ENCODE measurements at regions of chr1 and their contacts with region 1.

Region 1: DNA sequence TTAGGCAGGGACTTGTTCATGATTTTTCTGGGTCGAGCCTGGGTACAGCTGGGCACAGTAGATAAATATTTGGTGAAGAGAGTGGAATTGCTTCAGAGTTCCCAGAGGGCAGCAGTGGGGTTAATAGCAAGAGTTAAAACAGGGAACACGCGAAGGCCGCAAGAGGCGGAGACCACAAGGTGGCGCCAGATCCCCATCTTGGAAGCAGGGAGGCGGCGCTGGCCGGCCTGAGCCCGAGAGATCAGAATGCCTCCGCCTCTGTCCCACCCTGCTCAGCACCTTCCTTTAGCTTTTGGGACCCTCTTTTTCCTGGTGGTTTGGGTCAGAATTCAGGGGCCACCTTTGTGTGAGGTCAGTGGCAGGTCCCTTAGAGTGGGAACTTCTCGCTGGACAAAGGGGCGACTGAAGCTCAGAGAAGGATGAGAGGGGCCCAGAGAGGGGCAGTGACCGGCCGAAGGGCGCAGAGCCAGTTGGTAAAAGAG is 6.5 kb upstream of the PADI2 start:
- DNase-seq: peak; percentile 82 to 83 (median 83)
- H3K4me3 ChIP-seq: no peak overlapping the region
- H3K4me3 Mint-ChIP-seq: no peak overlapping the region
- H3K27ac ChIP-seq: no peak overlapping the region
- H3K27ac Mint-ChIP-seq: peak overlapping the region; percentile 33 to 88 (median 60)
- H3K4me1 ChIP-seq: peaks cover 56 to 57% of the 10 kb centered on the region in 2 donors
- H3K4me1 Mint-ChIP-seq: peaks cover 50% of the 10 kb centered on the region
- H3K27me3 ChIP-seq: no peaks in the 10 kb centered on the region
- H3K27me3 Mint-ChIP-seq: peaks cover 0 to 2% (median 0%) of the 10 kb centered on the region in 3 donors
- CTCF ChIP-seq: peak; percentile 93

Region 2: DNA sequence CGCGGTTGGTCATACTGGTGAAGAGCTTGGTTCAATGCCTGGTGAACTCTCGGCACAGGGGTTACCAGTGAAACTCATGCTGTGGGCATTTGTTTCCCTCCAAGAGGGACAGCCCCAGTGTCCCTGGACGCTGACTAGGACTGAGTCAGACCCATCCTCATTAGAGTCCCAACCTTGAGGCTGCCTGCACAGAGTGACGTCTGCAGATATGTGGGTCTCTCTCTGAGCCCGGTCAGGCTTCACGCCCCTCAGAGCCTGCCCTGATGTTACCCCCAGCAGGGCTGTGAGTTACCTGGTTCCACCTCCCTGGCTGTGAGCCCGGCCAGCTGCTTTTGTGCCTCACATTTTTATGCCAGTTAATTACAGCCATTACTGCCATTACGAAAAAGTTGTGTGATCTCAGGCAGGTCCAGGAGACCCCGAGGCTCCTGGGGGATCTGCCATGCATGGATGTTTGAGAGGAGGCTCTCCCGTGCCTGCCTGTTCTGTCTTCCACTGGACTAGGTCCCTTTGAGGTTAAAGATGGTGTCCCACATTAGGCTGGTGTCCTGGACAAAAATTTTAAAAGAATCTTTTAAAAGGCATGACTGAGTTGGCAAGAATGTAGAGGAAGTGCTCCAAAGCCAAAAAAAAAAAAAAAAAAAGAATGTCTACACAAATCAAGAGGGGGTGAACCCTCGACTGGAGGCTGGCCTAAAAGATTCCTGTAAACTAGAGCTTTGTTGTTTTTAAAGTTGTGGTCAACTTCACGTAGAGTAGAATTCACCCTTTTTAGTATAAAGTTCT is 42.5 kb after region 1 on chr1:
- intact Hi-C with region 1: no loop called
- DNase-seq: no peak
- H3K4me3 ChIP-seq: no peak overlapping the region
- H3K4me3 Mint-ChIP-seq: no peak overlapping the region
- H3K27ac ChIP-seq: no peak overlapping the region
- H3K27ac Mint-ChIP-seq: no peak overlapping the region
- H3K4me1 ChIP-seq: no peaks in the 10 kb centered on the region
- H3K4me1 Mint-ChIP-seq: peaks cover 1% of the 10 kb centered on the region
- H3K27me3 ChIP-seq: no peaks in the 10 kb centered on the region
- H3K27me3 Mint-ChIP-seq: peaks cover 6 to 11% (median 10%) of the 10 kb centered on the region in 3 donors
- CTCF ChIP-seq: no peak

Region 3: GRCh38 chr1:17181781-17182464 is 56.1 kb after region 1 on chr1:
- intact Hi-C with region 1: loop called in 1 of 2 experiments (anchors 5 kb)
- DNase-seq: peak; percentile 26 to 60 (median 47)
- H3K4me3 ChIP-seq: peak overlapping the region in 1 of 3 experiments; percentile 49
- H3K4me3 Mint-ChIP-seq: peak overlapping the region; percentile 16 to 27
- H3K27ac ChIP-seq: peak overlapping the region in 1 of 2 donors; percentile 60
- H3K27ac Mint-ChIP-seq: peak overlapping the region in 5 of 7 donors; percentile 46 to 72 (median 66)
- H3K4me1 ChIP-seq: peaks cover 18 to 29% of the 10 kb centered on the region in 2 donors
- H3K4me1 Mint-ChIP-seq: peaks cover 26% of the 10 kb centered on the region
- H3K27me3 ChIP-seq: no peaks in the 10 kb centered on the region
- H3K27me3 Mint-ChIP-seq: peaks cover 0 to 2% (median 1%) of the 10 kb centered on the region in 3 donors
- CTCF ChIP-seq: no peak

Region 4: DNA sequence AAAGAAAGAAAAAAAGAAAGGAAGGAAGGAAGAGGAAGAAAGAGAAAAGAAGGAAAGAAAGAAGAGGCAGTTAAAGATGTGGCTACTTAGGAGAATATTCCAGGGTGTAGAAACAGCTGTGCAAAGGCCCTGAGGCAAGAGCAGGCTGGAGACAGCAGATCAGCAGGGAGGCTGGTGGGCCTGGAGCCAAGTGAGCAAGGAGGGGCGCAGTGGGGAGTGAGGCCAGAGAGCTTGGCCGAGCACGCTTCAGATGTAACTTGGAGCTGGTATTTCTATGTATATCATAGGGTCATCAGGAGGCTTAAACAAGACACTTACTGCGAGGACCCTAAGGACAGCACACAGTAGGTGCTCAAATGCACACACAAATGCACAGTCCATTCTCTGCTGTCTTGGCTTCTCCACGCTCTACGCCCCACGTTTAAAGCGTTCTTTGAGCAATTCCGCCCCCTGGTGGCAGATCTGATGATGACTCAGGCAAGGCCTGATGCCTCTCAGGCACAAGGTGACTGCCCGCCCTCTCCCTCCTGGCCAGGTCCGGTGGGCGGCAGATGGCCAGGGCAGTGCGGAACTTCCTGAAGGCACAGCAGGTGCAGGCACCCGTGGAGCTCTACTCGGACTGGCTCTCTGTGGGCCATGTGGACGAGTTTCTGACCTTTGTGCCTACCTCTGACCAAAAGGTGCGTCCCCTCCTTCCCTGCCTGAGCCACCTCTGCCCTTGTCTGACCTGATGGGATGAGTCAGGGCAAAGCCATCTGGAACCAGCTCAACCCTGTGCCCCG is 111.2 kb after region 1 on chr1:
- intact Hi-C with region 1: loop called (anchors 1 kb)
- DNase-seq: peak; percentile 81 to 86 (median 85)
- H3K4me3 ChIP-seq: no peak overlapping the region
- H3K4me3 Mint-ChIP-seq: no peak overlapping the region
- H3K27ac ChIP-seq: no peak overlapping the region
- H3K27ac Mint-ChIP-seq: peak overlapping the region in 3 of 7 donors; percentile 41 to 63 (median 55)
- H3K4me1 ChIP-seq: peaks cover 12% of the 10 kb centered on the region in 2 donors
- H3K4me1 Mint-ChIP-seq: peaks cover 22% of the 10 kb centered on the region
- H3K27me3 ChIP-seq: no peaks in the 10 kb centered on the region
- H3K27me3 Mint-ChIP-seq: peaks cover 0 to 5% (median 5%) of the 10 kb centered on the region in 3 donors
- CTCF ChIP-seq: peak; percentile 93

Region 5: GRCh38 chr1:17335821-17336710 is 210.3 kb after region 1 on chr1:
- intact Hi-C with region 1: loop called in 1 of 2 experiments (anchors 10 kb)
- DNase-seq: peak; percentile 47 to 60 (median 58)
- H3K4me3 ChIP-seq: no peak overlapping the region
- H3K4me3 Mint-ChIP-seq: no peak overlapping the region
- H3K27ac ChIP-seq: no peak overlapping the region
- H3K27ac Mint-ChIP-seq: peak overlapping the region in 3 of 7 donors; percentile 26 to 60 (median 56)
- H3K4me1 ChIP-seq: no peaks in the 10 kb centered on the region
- H3K4me1 Mint-ChIP-seq: peaks cover 1% of the 10 kb centered on the region
- H3K27me3 ChIP-seq: no peaks in the 10 kb centered on the region
- H3K27me3 Mint-ChIP-seq: peaks cover 0 to 2% (median 1%) of the 10 kb centered on the region in 3 donors
- CTCF ChIP-seq: peak; percentile 90

Region 6: DNA sequence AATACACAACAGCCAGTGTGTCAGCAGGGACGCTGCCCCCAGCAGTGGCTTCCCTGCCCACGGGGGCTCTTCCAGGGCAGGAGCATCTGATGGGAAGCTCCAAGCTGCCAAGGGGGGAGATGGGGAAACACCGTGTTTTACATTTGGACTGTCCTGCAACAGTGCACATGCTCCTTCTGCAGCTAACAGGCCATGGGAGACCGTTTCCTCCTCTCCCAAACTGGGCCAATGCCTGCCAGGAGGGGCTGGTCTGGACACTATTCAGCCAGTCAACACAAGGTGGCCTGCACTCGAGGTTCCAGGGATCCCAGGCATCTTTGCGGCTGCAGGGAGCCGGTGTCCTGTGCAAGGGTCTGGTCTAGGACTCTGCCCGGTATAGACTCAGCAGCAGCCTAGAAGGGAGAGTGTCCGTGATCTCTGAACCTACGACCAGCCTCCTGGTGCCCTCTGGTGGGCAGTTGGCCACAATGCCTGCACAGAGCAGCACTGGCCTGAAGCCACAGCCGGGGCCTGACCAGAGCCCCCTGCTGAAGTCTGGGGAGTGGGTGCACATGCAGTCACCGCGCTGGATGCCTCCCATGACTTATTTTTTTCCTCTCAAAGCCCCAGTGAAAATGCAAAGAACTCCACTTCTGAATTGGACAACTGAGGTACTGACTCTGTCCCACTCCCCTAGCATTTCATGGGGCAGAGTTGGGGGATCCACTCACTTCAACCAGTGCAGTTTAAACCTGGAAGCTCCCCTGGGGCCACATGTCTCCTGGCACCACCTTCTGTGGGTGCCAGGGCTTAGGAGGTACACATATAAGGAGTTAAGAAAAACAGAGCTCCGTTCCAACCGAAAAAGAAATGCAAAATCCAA is 280.3 kb after region 1 on chr1:
- intact Hi-C with region 1: loop called in 1 of 2 experiments (anchors 10 kb)
- DNase-seq: peak; percentile 50 to 67 (median 51)
- H3K4me3 ChIP-seq: no peak overlapping the region
- H3K4me3 Mint-ChIP-seq: no peak overlapping the region
- H3K27ac ChIP-seq: no peak overlapping the region
- H3K27ac Mint-ChIP-seq: no peak overlapping the region
- H3K4me1 ChIP-seq: peaks cover 0 to 5% of the 10 kb centered on the region in 2 donors
- H3K4me1 Mint-ChIP-seq: peaks cover 7% of the 10 kb centered on the region
- H3K27me3 ChIP-seq: no peaks in the 10 kb centered on the region
- H3K27me3 Mint-ChIP-seq: peaks cover 0 to 2% (median 0%) of the 10 kb centered on the region in 3 donors
- CTCF ChIP-seq: peak; percentile 86

Measured in CD14-positive monocyte (primary cell).